ENCODE measurements at regions of chr19 and their contacts with region 1.

Region 1: DNA sequence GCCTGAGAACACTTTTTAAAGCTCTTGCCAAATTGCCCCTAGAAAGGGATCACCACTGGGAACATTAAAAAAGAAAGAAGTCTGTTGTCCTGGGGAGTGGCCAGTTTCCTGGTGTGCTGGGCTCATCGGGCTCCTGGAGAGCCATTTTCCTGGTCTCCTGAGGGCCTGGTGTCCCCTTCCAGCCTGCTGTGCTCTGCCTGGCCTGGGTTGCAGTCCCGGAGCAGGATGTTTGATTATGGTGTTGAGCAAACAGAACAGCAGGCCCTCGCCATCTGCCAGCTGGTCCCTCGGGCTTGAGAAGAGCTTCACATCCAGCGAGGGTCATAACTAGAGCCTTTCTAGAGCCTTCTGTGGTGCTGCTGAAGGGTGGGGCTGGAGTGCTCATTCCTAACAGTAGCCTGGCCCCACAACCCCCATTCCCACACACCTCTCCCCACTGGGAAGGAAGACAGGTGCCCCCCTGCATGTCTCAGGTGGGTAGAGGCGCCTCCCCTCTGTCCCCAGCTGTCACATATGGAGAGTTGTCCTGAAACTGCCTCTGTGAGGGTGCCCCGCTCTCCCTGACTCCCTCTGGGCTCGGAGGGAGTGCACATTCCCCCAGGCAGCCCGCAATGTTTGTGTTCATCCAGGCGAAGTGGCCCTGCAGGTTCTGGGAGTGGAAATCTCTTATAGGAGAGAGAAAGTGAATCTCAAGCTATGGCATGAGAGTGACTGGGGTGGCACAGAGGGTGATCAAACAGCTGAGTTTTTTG is 151.1 kb downstream of the SIPA1L3 start:
- DNase-seq: no peak
- H3K4me3 ChIP-seq: no peak overlapping the region
- H3K27ac ChIP-seq: no peak overlapping the region
- H3K4me1 ChIP-seq: peaks cover 10% of the 10 kb centered on the region
- H3K27me3 ChIP-seq: no peaks in the 10 kb centered on the region
- CTCF ChIP-seq: no peak

Region 2: GRCh38 chr19:38149661-38150061 is 91.5 kb after region 1 on chr19:
- CTCF ChIA-PET with region 1: no interaction called
- dilution Hi-C with region 1: loop called (anchors 5 kb)
- in situ Hi-C with region 1: no loop called
- intact Hi-C with region 1: no loop called
- DNase-seq: no peak
- H3K4me3 ChIP-seq: no peak overlapping the region
- H3K27ac ChIP-seq: no peak overlapping the region
- H3K4me1 ChIP-seq: no peaks in the 10 kb centered on the region
- H3K27me3 ChIP-seq: no peaks in the 10 kb centered on the region
- CTCF ChIP-seq: no peak

Region 3: DNA sequence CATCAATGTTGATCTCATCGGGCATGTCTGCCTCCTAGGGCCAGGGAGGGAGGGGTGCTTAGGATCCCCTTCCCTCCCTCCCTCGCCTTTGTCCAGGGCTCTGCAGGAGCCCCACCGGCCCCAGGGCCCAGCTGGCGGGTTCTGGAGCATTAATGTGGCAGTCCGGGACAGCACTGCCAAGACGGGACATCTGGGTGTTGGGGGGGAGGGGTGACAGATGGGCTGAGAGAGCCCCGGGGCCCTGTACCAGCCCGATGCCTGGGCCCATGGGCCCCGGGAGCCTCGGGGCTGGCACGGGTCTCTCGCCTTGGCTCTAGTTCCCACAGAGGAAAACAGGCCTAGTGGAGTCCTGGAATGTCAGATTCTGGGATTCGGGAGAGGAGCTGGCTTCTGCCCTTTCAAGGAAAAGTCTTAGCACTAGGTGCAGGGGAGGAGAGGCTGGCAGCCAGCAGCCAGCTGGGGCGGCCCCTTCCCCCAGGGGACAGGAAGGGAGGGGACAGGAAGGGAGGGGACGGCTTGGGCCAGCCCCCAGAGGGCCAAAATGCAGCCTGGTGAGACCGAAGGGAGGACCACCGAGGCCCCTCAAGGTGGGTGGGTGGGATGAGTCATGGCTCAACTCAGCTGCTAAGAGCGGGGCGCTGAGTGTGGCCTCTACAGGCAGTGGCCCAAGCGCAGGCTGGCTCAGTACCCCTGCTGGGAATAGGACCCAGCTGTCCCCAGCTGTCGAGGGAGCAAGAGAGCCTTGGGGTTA is 195.0 kb after region 1 on chr19:
- CTCF ChIA-PET with region 1: no interaction called
- dilution Hi-C with region 1: no loop called
- in situ Hi-C with region 1: no loop called
- intact Hi-C with region 1: no loop called
- DNase-seq: no peak
- H3K4me3 ChIP-seq: no peak overlapping the region
- H3K27ac ChIP-seq: no peak overlapping the region
- H3K4me1 ChIP-seq: peaks cover 33% of the 10 kb centered on the region
- H3K27me3 ChIP-seq: no peaks in the 10 kb centered on the region
- CTCF ChIP-seq: no peak

Region 4: DNA sequence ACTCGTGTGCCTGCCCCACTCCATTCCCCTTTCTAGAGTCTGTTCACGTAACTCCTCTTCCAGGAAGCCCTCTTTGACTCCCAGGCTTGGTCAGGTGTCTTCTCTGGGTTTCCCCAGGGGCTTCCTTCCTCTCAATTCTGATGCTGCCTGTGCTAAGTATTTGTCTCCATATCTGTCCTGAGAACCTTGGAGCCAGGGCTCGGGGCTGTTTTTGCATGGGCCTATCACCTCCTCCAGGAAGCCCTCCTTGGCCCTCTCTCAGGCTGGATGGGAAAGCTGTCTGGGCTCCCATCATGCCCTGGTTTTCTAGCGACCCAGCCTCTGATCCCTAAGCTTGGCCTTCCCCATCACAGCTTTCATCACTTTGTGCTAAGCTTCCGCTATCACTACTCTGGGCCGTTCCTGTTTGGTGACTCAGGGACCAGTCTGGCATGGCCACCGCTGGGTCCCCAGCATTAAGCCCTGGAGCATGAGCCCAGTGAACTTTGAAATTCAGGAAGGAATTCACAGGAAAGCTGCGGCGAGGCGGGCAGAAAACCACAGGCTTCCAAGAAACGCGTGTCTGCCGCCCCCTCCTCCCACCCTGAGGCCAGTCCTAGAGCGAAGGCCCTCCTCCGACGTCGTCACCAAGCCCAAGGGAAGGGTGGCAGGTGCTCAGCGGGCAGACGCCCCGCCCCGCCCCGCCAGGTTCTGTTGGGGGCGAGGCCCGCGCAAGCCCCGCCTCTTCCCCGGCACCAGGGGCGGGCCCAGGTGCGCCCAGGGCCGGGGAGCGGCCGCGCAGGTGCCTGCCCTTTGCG is 205.8 kb after region 1 on chr19:
- CTCF ChIA-PET with region 1: no interaction called
- dilution Hi-C with region 1: no loop called
- in situ Hi-C with region 1: no loop called
- intact Hi-C with region 1: no loop called
- DNase-seq: peak; percentile 95
- H3K4me3 ChIP-seq: peak overlapping the region in 2 of 3 experiments; percentile 7 to 83
- H3K27ac ChIP-seq: peak overlapping the region; percentile 90
- H3K4me1 ChIP-seq: peaks cover 28% of the 10 kb centered on the region
- H3K27me3 ChIP-seq: no peaks in the 10 kb centered on the region
- CTCF ChIP-seq: no peak

Measured in mammary epithelial cell (primary cell).